ENCODE measurements at regions of chr3 and their contacts with region 1.

Region 1: DNA sequence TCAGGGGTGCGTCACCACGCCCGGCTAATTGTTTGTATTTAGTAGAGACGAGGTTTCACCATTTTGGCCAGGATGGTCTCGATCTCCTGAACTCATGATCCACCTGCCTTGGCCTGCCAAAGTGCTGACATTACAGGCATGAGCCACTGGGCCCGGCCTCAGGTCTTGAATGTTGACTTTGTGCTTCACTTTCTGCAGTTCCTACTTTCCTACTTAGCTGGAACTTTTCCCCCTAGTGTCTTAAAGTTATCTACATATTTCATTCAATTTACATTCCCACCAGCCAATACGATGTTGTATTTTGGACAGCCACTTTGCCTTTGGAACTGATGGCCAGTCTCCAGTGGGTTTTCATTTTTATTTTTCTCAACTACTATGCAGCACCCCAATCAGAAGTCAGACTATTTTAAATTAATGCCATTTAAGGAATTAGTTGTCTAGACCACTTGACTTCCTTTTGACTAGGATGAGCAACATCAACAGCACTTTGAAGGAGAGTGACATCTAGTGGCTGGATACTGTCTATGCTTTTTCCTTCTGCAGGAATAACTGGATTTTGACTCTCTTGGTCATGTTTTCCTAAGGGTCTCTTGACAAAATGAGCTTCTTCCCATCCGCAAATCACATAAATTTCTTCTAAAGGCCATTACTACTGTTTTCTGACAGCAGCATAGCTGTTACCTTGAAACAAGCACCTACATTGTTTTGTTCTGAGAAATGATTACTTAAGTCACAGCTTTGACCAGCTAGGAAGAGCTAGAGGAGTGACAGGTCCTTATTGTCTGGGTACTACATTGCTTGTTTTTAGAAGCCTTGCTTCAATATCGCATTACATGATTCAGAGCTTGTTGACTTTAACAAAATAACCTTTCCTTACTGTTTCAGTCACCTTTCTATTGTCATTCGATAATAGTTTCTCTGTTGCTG is 140.2 kb downstream of the ITPR1 start:
- DNase-seq: peak; percentile 32 to 73 (median 54)
- ATAC-seq: peak; percentile 86
- H3K4me3 ChIP-seq: no peak overlapping the region
- H3K27ac ChIP-seq: no peak overlapping the region
- H3K4me1 ChIP-seq: peaks cover 2 to 4% of the 10 kb centered on the region in 2 experiments; a peak in 3 of 5 replicates
- H3K27me3 ChIP-seq: no peaks in the 10 kb centered on the region
- CTCF ChIP-seq: peak; percentile 77 to 97 (median 91)
- EP300 ChIP-seq: no peak
- POLR2A ChIP-seq: no peak
- RAD21 ChIP-seq: peak; percentile 96 to 97

Region 2: DNA sequence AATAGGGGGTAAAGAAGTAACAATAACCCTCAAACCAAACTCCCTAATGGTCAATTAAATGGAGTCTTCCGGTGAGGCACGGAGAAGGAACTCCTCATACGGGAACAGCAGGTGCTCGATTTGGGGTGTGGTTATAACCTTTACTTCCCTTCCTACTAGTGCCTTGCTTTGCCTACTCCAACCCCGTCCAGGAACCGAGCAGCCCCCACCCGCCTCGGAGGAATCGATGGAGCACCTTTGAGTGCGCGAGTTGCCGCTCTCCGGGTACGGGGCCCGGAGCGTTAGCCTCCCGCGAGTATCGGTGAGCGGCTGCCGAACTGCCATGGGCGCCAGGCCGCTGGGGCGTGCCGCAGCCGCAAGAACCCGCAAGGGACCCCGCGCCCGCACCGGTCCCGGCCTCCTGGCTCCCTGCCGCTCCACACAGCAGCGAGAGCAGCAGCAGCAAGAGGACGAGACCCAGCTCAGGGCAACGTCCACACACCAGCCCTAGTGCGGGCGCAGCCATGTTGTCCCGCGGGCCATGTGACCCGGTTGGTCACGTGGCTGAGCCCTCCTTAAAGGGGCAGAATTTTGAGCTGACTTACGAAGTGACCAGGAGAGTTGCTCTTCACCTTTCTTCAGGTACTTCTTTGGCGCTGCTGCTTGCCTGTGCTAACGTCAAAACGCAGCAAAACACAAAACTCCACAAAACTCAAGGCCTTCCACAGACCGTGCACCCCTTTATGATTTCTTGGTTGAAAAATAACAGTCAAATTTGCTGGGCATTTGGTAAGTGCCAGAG is 166.4 kb before region 1 on chr3 and contains the start of gene SUMF1:
- CTCF ChIA-PET with region 1: no interaction called
- POLR2A ChIA-PET with region 1: no interaction called
- in situ Hi-C with region 1: no loop called
- intact Hi-C with region 1: loop called (anchors 5 kb)
- DNase-seq: peak; percentile 91 to 94 (median 94)
- ATAC-seq: peak; percentile 99
- H3K4me3 ChIP-seq: peak within 1 kb of the TSS; percentile 71
- H3K27ac ChIP-seq: peak within 1 kb of the TSS; percentile 75
- H3K4me1 ChIP-seq: peaks cover 13 to 14% of the 10 kb centered on the region in 2 experiments; a peak in 4 of 5 replicates
- H3K27me3 ChIP-seq: no peaks in the 10 kb centered on the region
- CTCF ChIP-seq: no peak
- EP300 ChIP-seq: 0 out of 2 replicates have a peak, but pooled peaks have one; percentile 12
- POLR2A ChIP-seq: peak; percentile 94
- RAD21 ChIP-seq: peak in 1 of 2 experiments; percentile 1; a peak in 1 of 4 replicates
- polyA plus RNA-seq, gene SUMF1: 1.3 to 1.4 TPM

Region 3: GRCh38 chr3:4546346-4547178 is 86.8 kb before region 1 on chr3:
- CTCF ChIA-PET with region 1: no interaction called
- POLR2A ChIA-PET with region 1: no interaction called
- in situ Hi-C with region 1: no loop called
- intact Hi-C with region 1: no loop called
- DNase-seq: peak in 2 of 4 experiments; percentile 49 to 53
- ATAC-seq: peak; percentile 75
- H3K4me3 ChIP-seq: no peak overlapping the region
- H3K27ac ChIP-seq: peak overlapping the region; percentile 6; the same call in 1 of the 3 replicates
- H3K4me1 ChIP-seq: peaks cover 0 to 14% of the 10 kb centered on the region in 2 experiments; a peak in 3 of 5 replicates
- H3K27me3 ChIP-seq: no peaks in the 10 kb centered on the region
- CTCF ChIP-seq: no peak
- EP300 ChIP-seq: peak; percentile 38; the same call in 1 of the 2 replicates
- POLR2A ChIP-seq: no peak
- RAD21 ChIP-seq: no peak